SK-N-SH (cell line): ENCODE measurements at regions of chr2 and their contacts with region 1.

Region 1: GRCh38 chr2:27050281-27050995 is 1.0 kb upstream of the AGBL5 start:
- DNase-seq: peak; percentile 93
- H3K4me3 ChIP-seq: peak overlapping the region; percentile 86 to 89
- H3K27ac ChIP-seq: peak overlapping the region; percentile 81 to 98
- H3K4me1 ChIP-seq: peaks cover 10 to 15% of the 10 kb centered on the region in 2 experiments; a peak in 2 of 4 replicates
- H3K27me3 ChIP-seq: no peaks in the 10 kb centered on the region
- CTCF ChIP-seq: peak; percentile 47
- EP300 ChIP-seq: peak in 1 of 2 experiments; percentile 76; a peak in 2 of 4 replicates
- RAD21 ChIP-seq: no peak; the same call in 1 of the 2 replicates

Region 2: GRCh38 chr2:26970244-26970920 is 80.1 kb before region 1 on chr2 and contains the start of gene MAPRE3:
- CTCF ChIA-PET with region 1: interaction called, 11 read pairs
- POLR2A ChIA-PET with region 1: interaction called, 3 read pairs
- DNase-seq: peak; percentile 100
- H3K4me3 ChIP-seq: peak within 1 kb of the TSS; percentile 65 to 78
- H3K27ac ChIP-seq: peak within 1 kb of the TSS in 1 of 2 experiments; percentile 7; a peak in 1 of 4 replicates
- H3K4me1 ChIP-seq: peaks cover 0 to 13% of the 10 kb centered on the region in 2 experiments; a peak in 2 of 4 replicates
- H3K27me3 ChIP-seq: peaks cover 7% of the 10 kb centered on the region; the same call in 1 of the 2 replicates
- CTCF ChIP-seq: no peak
- EP300 ChIP-seq: no peak
- RAD21 ChIP-seq: no peak
- polyA plus RNA-seq, gene MAPRE3: 20.2 and 24.4 TPM in 2 replicates

Region 3: GRCh38 chr2:27040282-27040681 is 10.2 kb before region 1 on chr2:
- CTCF ChIA-PET with region 1: interaction called, 12 read pairs
- POLR2A ChIA-PET with region 1: interaction called, 8 read pairs
- DNase-seq: no peak
- H3K4me3 ChIP-seq: no peak overlapping the region
- H3K27ac ChIP-seq: no peak overlapping the region
- H3K4me1 ChIP-seq: peaks cover 0 to 7% of the 10 kb centered on the region in 2 experiments; a peak in 1 of 4 replicates
- H3K27me3 ChIP-seq: no peaks in the 10 kb centered on the region
- CTCF ChIP-seq: no peak
- EP300 ChIP-seq: no peak
- RAD21 ChIP-seq: no peak

Region 4: GRCh38 chr2:27071277-27071989 is 21.0 kb after region 1 on chr2 and contains the start of gene OST4:
- CTCF ChIA-PET with region 1: interaction called, 216 read pairs
- POLR2A ChIA-PET with region 1: interaction called, 80 read pairs
- DNase-seq: peak; percentile 100
- H3K4me3 ChIP-seq: peak within 1 kb of the TSS; percentile 97 to 98
- H3K27ac ChIP-seq: peak within 1 kb of the TSS; percentile 89 to 98
- H3K4me1 ChIP-seq: peaks cover 44 to 66% of the 10 kb centered on the region in 2 experiments
- H3K27me3 ChIP-seq: no peaks in the 10 kb centered on the region
- CTCF ChIP-seq: peak; percentile 8; the same call in 1 of the 2 replicates
- EP300 ChIP-seq: peak in 1 of 2 experiments; percentile 41; a peak in 1 of 4 replicates
- RAD21 ChIP-seq: no peak
- polyA plus RNA-seq, gene OST4: 876 and 1,851 TPM in 2 replicates

Region 5: GRCh38 chr2:27086090-27086723 is 35.8 kb after region 1 on chr2:
- CTCF ChIA-PET with region 1: interaction called, 216 read pairs
- POLR2A ChIA-PET with region 1: interaction called, 36 read pairs
- DNase-seq: peak; percentile 100
- H3K4me3 ChIP-seq: peak overlapping the region; percentile 65 to 75
- H3K27ac ChIP-seq: peak overlapping the region; percentile 37 to 89; a peak in 3 of 4 replicates
- H3K4me1 ChIP-seq: peaks cover 9 to 46% of the 10 kb centered on the region in 2 experiments; a peak in 3 of 4 replicates
- H3K27me3 ChIP-seq: no peaks in the 10 kb centered on the region
- CTCF ChIP-seq: peak; percentile 69
- EP300 ChIP-seq: peak in 1 of 2 experiments; percentile 42; a peak in 1 of 4 replicates
- RAD21 ChIP-seq: peak; percentile 52

Region 6: GRCh38 chr2:27162151-27163121 is 112.0 kb after region 1 on chr2:
- CTCF ChIA-PET with region 1: no interaction called
- POLR2A ChIA-PET with region 1: no interaction called
- DNase-seq: no peak
- H3K4me3 ChIP-seq: no peak overlapping the region
- H3K27ac ChIP-seq: no peak overlapping the region
- H3K4me1 ChIP-seq: no peaks in the 10 kb centered on the region
- H3K27me3 ChIP-seq: no peaks in the 10 kb centered on the region
- CTCF ChIP-seq: no peak
- EP300 ChIP-seq: no peak
- RAD21 ChIP-seq: no peak